ENCODE measurements at regions of chr22 and their contacts with region 1.

Region 1: GRCh38 chr22:40310081-40310767 is 36.1 kb upstream of the ADSL start:
- DNase-seq: peak; percentile 84
- H3K4me3 ChIP-seq: peak overlapping the region; percentile 35
- H3K27ac ChIP-seq: peak overlapping the region; percentile 74
- H3K27me3 ChIP-seq: no peaks in the 10 kb centered on the region
- CTCF ChIP-seq: no peak

Region 2: GRCh38 chr22:40320687-40321086 is 10.5 kb after region 1 on chr22:
- CTCF ChIA-PET with region 1: no interaction called
- POLR2A ChIA-PET with region 1: no interaction called
- DNase-seq: no peak
- H3K4me3 ChIP-seq: no peak overlapping the region
- H3K27ac ChIP-seq: no peak overlapping the region
- H3K27me3 ChIP-seq: no peaks in the 10 kb centered on the region
- CTCF ChIP-seq: no peak

Region 3: DNA sequence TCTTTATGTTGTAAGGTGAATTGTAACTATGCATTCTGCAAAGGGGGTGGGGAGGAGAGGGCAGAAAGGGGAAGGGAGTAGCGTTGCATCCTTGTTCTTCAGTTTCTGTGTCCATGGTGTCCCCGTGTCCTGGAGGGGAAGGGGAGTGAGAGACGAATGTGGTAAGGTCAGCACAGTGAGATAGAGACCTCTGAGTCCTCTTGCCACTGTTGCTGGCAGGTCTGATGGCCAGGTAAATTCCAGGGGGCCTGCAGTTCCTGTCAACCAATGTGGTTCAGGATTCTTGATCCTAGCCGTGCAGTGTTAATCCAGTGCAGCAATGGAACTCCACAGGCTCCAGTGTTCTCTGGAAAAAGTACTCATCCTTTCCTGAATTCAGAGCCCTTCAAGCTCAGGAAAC is 21.5 kb after region 1 on chr22:
- CTCF ChIA-PET with region 1: no interaction called
- POLR2A ChIA-PET with region 1: interaction called, 10 read pairs
- DNase-seq: no peak
- H3K4me3 ChIP-seq: no peak overlapping the region
- H3K27ac ChIP-seq: peak overlapping the region; percentile 60
- H3K27me3 ChIP-seq: no peaks in the 10 kb centered on the region
- CTCF ChIP-seq: no peak

Region 4: DNA sequence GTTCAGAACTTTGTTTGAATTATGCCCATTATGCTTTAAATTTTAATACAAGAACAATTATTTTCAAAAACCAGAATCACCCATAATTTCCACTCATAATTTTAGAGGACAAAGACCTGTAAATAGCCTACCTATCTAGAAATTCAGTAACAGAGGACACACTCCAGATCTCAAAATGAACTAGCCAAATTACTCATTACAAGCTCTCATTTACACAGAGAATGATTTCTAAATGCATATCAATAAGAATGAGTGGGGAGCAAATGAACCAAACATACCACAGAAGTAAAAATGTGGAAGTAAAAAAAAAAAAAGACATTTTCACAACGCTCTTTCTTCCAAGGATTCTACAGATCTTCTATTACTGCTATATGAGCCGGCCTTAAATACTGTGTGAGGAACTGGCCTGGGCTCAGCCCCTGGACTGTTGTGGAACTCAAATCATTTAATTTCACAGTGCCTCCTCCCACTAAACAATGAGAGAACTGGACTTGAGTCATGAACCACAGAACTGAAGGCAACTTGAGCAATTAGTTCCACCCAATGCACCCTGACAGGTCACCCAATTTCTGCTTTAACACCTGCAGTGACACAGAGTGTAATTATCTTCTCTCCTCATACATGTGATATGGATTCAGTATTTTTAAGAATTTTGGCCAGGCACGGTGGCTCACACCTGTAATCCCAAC is 318.3 kb after region 1 on chr22:
- CTCF ChIA-PET with region 1: no interaction called
- POLR2A ChIA-PET with region 1: no interaction called
- DNase-seq: no peak
- H3K4me3 ChIP-seq: no peak overlapping the region
- H3K27ac ChIP-seq: no peak overlapping the region
- H3K27me3 ChIP-seq: no peaks in the 10 kb centered on the region
- CTCF ChIP-seq: no peak

Measured in AG04450 (cell line).